ENCODE measurements at regions of chr3 and their contacts with region 1.

Region 1: DNA sequence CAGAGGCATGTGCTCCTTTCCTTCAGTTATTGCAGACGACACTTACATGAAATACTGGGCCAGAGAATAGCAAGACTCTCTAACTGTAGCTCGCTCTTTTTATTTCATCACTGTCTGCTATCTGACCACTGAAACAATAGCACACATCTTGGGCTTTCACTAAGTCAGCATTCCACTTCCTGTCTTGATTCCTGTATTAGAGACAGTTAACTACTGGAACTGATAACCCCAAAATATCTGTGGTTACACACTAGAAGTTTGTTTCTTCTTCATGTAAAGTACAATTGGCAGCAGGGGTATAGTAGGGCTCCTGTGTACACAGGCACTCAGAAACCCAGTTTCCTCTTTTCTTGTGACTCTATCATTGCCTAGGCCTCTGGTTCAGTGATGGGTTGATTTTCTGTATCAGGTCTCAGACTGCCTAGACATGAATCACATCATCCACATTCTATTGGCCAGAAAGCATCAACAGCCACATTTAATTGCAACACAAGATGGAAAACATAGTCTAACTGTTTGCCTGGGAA is 230.2 kb upstream of the CD96 start:
- DNase-seq: peak in 1 of 9 donors; percentile 19
- ATAC-seq: peak; percentile 62
- H3K4me3 ChIP-seq: no peak overlapping the region
- H3K4me3 Mint-ChIP-seq: peak overlapping the region in 8 of 10 donors; percentile 15 to 76 (median 56)
- H3K27ac ChIP-seq: peak overlapping the region; percentile 63
- H3K27ac Mint-ChIP-seq: peak overlapping the region in 7 of 9 donors; percentile 79 to 99 (median 92)
- H3K4me1 ChIP-seq: peaks cover 22 to 51% of the 10 kb centered on the region in 2 donors
- H3K4me1 Mint-ChIP-seq: peaks cover 0 to 57% (median 0%) of the 10 kb centered on the region in 7 donors
- H3K27me3 ChIP-seq: no peaks in the 10 kb centered on the region
- H3K27me3 Mint-ChIP-seq: no peaks in the 10 kb centered on the region

Region 2: GRCh38 chr3:111238885-111239284 is 72.9 kb before region 1 on chr3:
- CTCF ChIA-PET with region 1: no interaction called
- POLR2A ChIA-PET with region 1: no interaction called
- intact Hi-C with region 1: loop called in 1 of 2 experiments (anchors 1 kb)
- DNase-seq: peak in 6 of 9 donors; percentile 16 to 47 (median 34)
- ATAC-seq: peak; percentile 75
- H3K4me3 ChIP-seq: no peak overlapping the region
- H3K4me3 Mint-ChIP-seq: peak overlapping the region in 8 of 10 donors; percentile 0 to 76 (median 54)
- H3K27ac ChIP-seq: peak overlapping the region; percentile 4
- H3K27ac Mint-ChIP-seq: peak overlapping the region; percentile 0 to 90 (median 64)
- H3K4me1 ChIP-seq: peaks cover 6 to 15% of the 10 kb centered on the region in 2 donors
- H3K4me1 Mint-ChIP-seq: peaks cover 11 to 47% (median 35%) of the 10 kb centered on the region in 7 donors
- H3K27me3 ChIP-seq: no peaks in the 10 kb centered on the region
- H3K27me3 Mint-ChIP-seq: no peaks in the 10 kb centered on the region

Region 3: GRCh38 chr3:111260878-111261277 is 50.9 kb before region 1 on chr3:
- CTCF ChIA-PET with region 1: no interaction called
- POLR2A ChIA-PET with region 1: no interaction called
- intact Hi-C with region 1: loop called in 1 of 2 experiments (anchors 5 kb)
- DNase-seq: no peak
- ATAC-seq: no peak
- H3K4me3 ChIP-seq: no peak overlapping the region
- H3K4me3 Mint-ChIP-seq: no peak overlapping the region
- H3K27ac ChIP-seq: no peak overlapping the region
- H3K27ac Mint-ChIP-seq: no peak overlapping the region
- H3K4me1 ChIP-seq: no peaks in the 10 kb centered on the region
- H3K4me1 Mint-ChIP-seq: peaks cover 5 to 25% (median 9%) of the 10 kb centered on the region in 7 donors
- H3K27me3 ChIP-seq: no peaks in the 10 kb centered on the region
- H3K27me3 Mint-ChIP-seq: peaks cover 0 to 34% (median 0%) of the 10 kb centered on the region in 5 donors

Region 4: GRCh38 chr3:111299068-111299672 is 12.6 kb before region 1 on chr3:
- CTCF ChIA-PET with region 1: interaction called, 4 read pairs
- POLR2A ChIA-PET with region 1: no interaction called
- intact Hi-C with region 1: loop called in 1 of 2 experiments (anchors 2 kb)
- DNase-seq: no peak
- ATAC-seq: no peak
- H3K4me3 ChIP-seq: no peak overlapping the region
- H3K4me3 Mint-ChIP-seq: no peak overlapping the region
- H3K27ac ChIP-seq: no peak overlapping the region
- H3K27ac Mint-ChIP-seq: no peak overlapping the region
- H3K4me1 ChIP-seq: no peaks in the 10 kb centered on the region
- H3K4me1 Mint-ChIP-seq: peaks cover 9 to 62% (median 17%) of the 10 kb centered on the region in 7 donors
- H3K27me3 ChIP-seq: no peaks in the 10 kb centered on the region
- H3K27me3 Mint-ChIP-seq: peaks cover 0 to 5% (median 3%) of the 10 kb centered on the region in 5 donors

Region 5: GRCh38 chr3:111324645-111325044 is 12.9 kb after region 1 on chr3:
- CTCF ChIA-PET with region 1: interaction called, 3 read pairs
- POLR2A ChIA-PET with region 1: interaction called, 4 read pairs
- intact Hi-C with region 1: loop called (anchors 1 kb)
- DNase-seq: no peak
- ATAC-seq: peak; percentile 34
- H3K4me3 ChIP-seq: peak overlapping the region; percentile 40
- H3K4me3 Mint-ChIP-seq: peak overlapping the region; percentile 6 to 84 (median 76)
- H3K27ac ChIP-seq: no peak overlapping the region
- H3K27ac Mint-ChIP-seq: peak overlapping the region; percentile 74 to 88 (median 84)
- H3K4me1 ChIP-seq: peaks cover 11 to 16% of the 10 kb centered on the region in 2 donors
- H3K4me1 Mint-ChIP-seq: peaks cover 23 to 40% (median 34%) of the 10 kb centered on the region in 7 donors
- H3K27me3 ChIP-seq: no peaks in the 10 kb centered on the region
- H3K27me3 Mint-ChIP-seq: no peaks in the 10 kb centered on the region

Region 6: DNA sequence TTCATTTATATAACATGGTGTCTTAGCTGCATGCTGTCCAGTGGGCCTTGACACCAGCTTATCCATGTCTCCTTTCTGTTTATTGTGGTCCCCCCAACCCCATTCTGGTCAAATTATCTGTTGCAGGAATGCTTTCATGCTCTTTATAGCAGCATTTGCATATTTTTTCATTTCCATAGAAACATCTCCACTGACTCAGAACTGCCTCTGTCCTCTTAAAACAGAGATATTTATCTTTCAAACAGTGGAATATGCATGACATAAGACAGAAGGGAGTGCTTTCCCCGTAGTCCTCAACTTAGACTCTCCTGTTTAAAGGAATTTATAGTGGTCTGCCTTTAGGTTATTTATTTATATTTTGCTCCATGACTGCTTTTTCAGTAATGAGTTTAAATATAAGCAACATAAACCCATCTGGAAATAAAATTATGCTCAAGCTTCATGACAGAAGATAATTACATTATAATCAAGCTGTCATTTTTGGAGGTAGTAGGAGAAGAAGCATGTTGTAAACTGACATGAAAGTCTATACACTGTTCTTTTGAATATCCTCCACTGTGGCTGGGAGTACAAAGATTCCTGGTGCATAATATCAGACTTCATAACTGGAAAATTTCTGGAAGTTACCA is 50.7 kb after region 1 on chr3:
- CTCF ChIA-PET with region 1: no interaction called
- POLR2A ChIA-PET with region 1: no interaction called
- intact Hi-C with region 1: no loop called
- DNase-seq: no peak
- ATAC-seq: no peak
- H3K4me3 ChIP-seq: no peak overlapping the region
- H3K4me3 Mint-ChIP-seq: no peak overlapping the region
- H3K27ac ChIP-seq: no peak overlapping the region
- H3K27ac Mint-ChIP-seq: no peak overlapping the region
- H3K4me1 ChIP-seq: no peaks in the 10 kb centered on the region
- H3K4me1 Mint-ChIP-seq: no peaks in the 10 kb centered on the region
- H3K27me3 ChIP-seq: no peaks in the 10 kb centered on the region
- H3K27me3 Mint-ChIP-seq: no peaks in the 10 kb centered on the region

Region 7: GRCh38 chr3:111392901-111393351 is 81.2 kb after region 1 on chr3:
- CTCF ChIA-PET with region 1: no interaction called
- POLR2A ChIA-PET with region 1: no interaction called
- intact Hi-C with region 1: loop called in 1 of 2 experiments (anchors 5 kb)
- DNase-seq: peak in 7 of 9 donors; percentile 40 to 78 (median 75)
- ATAC-seq: peak; percentile 99
- H3K4me3 ChIP-seq: no peak overlapping the region
- H3K4me3 Mint-ChIP-seq: peak overlapping the region in 9 of 10 donors; percentile 1 to 59 (median 22)
- H3K27ac ChIP-seq: peak overlapping the region; percentile 25
- H3K27ac Mint-ChIP-seq: peak overlapping the region in 8 of 9 donors; percentile 65 to 96 (median 88)
- H3K4me1 ChIP-seq: peaks cover 0 to 13% of the 10 kb centered on the region in 2 donors
- H3K4me1 Mint-ChIP-seq: peaks cover 10 to 29% (median 23%) of the 10 kb centered on the region in 7 donors
- H3K27me3 ChIP-seq: no peaks in the 10 kb centered on the region
- H3K27me3 Mint-ChIP-seq: no peaks in the 10 kb centered on the region

Region 8: GRCh38 chr3:112074721-112075497 is 763.1 kb after region 1 on chr3:
- CTCF ChIA-PET with region 1: no interaction called
- POLR2A ChIA-PET with region 1: no interaction called
- intact Hi-C with region 1: loop called in 1 of 2 experiments (anchors 10 kb)
- DNase-seq: peak in 8 of 9 donors; percentile 29 to 60 (median 52)
- ATAC-seq: peak; percentile 88
- H3K4me3 ChIP-seq: no peak overlapping the region
- H3K4me3 Mint-ChIP-seq: peak overlapping the region; percentile 32 to 76 (median 56)
- H3K27ac ChIP-seq: peak overlapping the region; percentile 32
- H3K27ac Mint-ChIP-seq: peak overlapping the region; percentile 72 to 95 (median 85)
- H3K4me1 ChIP-seq: peaks cover 4 to 17% of the 10 kb centered on the region in 2 donors
- H3K4me1 Mint-ChIP-seq: peaks cover 17 to 57% (median 51%) of the 10 kb centered on the region in 7 donors
- H3K27me3 ChIP-seq: no peaks in the 10 kb centered on the region
- H3K27me3 Mint-ChIP-seq: peaks cover 0 to 3% (median 0%) of the 10 kb centered on the region in 5 donors

Measured in naive thymus-derived CD4-positive, alpha-beta T cell (primary cell).